Stomach (tissue), 19 donors: ENCODE measurements at regions of chr10 and their contacts with region 1.

Region 1: DNA sequence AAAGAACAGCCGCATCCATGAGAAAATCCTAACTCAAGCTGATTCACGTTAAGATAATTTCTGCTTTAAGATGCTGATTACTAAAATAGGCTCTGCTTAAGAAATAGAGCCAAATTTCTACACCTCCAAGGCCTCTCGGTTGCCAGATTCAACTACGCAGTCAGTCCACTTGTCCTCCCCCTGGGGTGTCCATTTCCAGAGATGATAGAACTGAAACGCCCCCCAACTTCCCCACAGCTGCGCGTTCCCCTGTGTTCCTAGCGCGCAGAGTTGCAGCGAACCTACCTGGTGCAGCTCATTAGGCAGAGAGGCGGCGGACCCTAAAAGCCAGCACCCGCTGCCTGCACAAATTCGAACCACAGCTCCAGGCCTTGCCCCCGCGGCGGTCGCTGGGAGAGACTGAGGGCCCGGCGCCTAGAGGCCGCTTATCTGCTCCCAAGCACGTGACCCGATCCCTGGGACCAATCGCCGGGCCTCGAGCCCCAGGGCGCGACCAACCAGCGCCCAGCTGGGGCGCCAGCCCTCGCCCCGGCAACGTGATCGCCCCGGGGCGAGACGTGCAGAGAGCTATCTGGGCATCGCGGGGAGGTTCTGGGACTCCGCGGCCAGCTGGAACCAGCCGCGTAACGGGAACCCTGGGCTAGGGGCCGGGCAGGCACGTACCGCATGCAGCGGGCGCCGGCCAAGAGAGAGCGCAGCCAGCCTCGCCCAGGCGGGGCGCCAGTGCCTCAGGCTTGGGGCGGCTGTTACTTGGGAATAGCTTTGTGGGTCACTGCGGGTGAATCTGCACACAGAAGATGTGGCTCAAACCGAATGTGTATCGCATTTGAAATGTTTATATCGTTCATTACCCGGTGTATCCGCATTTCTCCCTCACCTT is at the start of gene PPP1R3C:
- DNase-seq: peak; percentile 89 to 97
- H3K4me3 ChIP-seq: peak within 1 kb of the TSS; percentile 58 to 64 (median 61)
- H3K27ac ChIP-seq: peak within 1 kb of the TSS; percentile 79 to 90 (median 83)
- H3K4me1 ChIP-seq: peaks cover 6 to 55% (median 34%) of the 10 kb centered on the region in 4 donors
- H3K27me3 ChIP-seq: peaks cover 0 to 11% (median 0%) of the 10 kb centered on the region in 3 donors
- CTCF ChIP-seq: no peak
- EP300 ChIP-seq: no peak
- POLR2A ChIP-seq: peak in 2 of 4 donors; percentile 26 to 36
- total RNA-seq, gene PPP1R3C: 1.2 to 50.0 (median 12.8) TPM

Region 2: GRCh38 chr10:91495402-91495801 is 137.5 kb before region 1 on chr10:
- intact Hi-C with region 1: loop called (anchors 5 kb)
- DNase-seq: no peak
- H3K4me3 ChIP-seq: no peak overlapping the region
- H3K27ac ChIP-seq: no peak overlapping the region
- H3K4me1 ChIP-seq: peaks cover 0 to 13% (median 0%) of the 10 kb centered on the region in 4 donors
- H3K27me3 ChIP-seq: no peaks in the 10 kb centered on the region
- CTCF ChIP-seq: no peak
- EP300 ChIP-seq: no peak
- POLR2A ChIP-seq: no peak

Region 3: GRCh38 chr10:91551856-91552255 is 81.1 kb before region 1 on chr10:
- intact Hi-C with region 1: loop called (anchors 10 kb)
- DNase-seq: peak; percentile 38 to 87
- H3K4me3 ChIP-seq: peak overlapping the region in 3 of 4 donors; percentile 14 to 22 (median 17)
- H3K27ac ChIP-seq: peak overlapping the region in 1 of 5 donors; percentile 35
- H3K4me1 ChIP-seq: peaks cover 21 to 51% (median 33%) of the 10 kb centered on the region in 4 donors
- H3K27me3 ChIP-seq: no peaks in the 10 kb centered on the region
- CTCF ChIP-seq: peak in 5 of 7 experiments; percentile 29 to 67 (median 36)
- EP300 ChIP-seq: no peak
- POLR2A ChIP-seq: no peak